Breast epithelium (tissue), 4 donors: ENCODE measurements at regions of chr19 and their contacts with region 1.

Region 1: GRCh38 chr19:37012093-37012745 is 66.0 kb upstream of the ZNF420 start:
- DNase-seq: no peak
- H3K4me3 ChIP-seq: no peak overlapping the region
- H3K27ac ChIP-seq: no peak overlapping the region
- H3K4me1 ChIP-seq: no peaks in the 10 kb centered on the region
- H3K27me3 ChIP-seq: no peaks in the 10 kb centered on the region
- CTCF ChIP-seq: no peak
- POLR2A ChIP-seq: no peak

Region 2: GRCh38 chr19:38502410-38503094 is 1490.3 kb after region 1 on chr19:
- intact Hi-C with region 1: loop called (anchors 5 kb)
- DNase-seq: no peak
- H3K4me3 ChIP-seq: no peak overlapping the region
- H3K27ac ChIP-seq: no peak overlapping the region
- H3K4me1 ChIP-seq: no peaks in the 10 kb centered on the region
- H3K27me3 ChIP-seq: no peaks in the 10 kb centered on the region
- CTCF ChIP-seq: no peak
- POLR2A ChIP-seq: no peak